ENCODE measurements at regions of chr1 and their contacts with region 1.

Region 1: GRCh38 chr1:197438010-197438790 is 170.1 kb downstream of the CRB1 start:
- DNase-seq: no peak
- CTCF ChIP-seq: no peak

Region 2: GRCh38 chr1:197254866-197255265 is 183.3 kb before region 1 on chr1:
- CTCF ChIA-PET with region 1: no interaction called
- POLR2A ChIA-PET with region 1: no interaction called
- DNase-seq: no peak
- CTCF ChIP-seq: no peak

Region 3: GRCh38 chr1:197464044-197464443 is 25.8 kb after region 1 on chr1:
- CTCF ChIA-PET with region 1: interaction called, 10 read pairs
- POLR2A ChIA-PET with region 1: no interaction called
- DNase-seq: no peak
- CTCF ChIP-seq: no peak